Endothelial cell of umbilical vein (primary cell): ENCODE measurements at regions of chr4 and their contacts with region 1.

Region 1: DNA sequence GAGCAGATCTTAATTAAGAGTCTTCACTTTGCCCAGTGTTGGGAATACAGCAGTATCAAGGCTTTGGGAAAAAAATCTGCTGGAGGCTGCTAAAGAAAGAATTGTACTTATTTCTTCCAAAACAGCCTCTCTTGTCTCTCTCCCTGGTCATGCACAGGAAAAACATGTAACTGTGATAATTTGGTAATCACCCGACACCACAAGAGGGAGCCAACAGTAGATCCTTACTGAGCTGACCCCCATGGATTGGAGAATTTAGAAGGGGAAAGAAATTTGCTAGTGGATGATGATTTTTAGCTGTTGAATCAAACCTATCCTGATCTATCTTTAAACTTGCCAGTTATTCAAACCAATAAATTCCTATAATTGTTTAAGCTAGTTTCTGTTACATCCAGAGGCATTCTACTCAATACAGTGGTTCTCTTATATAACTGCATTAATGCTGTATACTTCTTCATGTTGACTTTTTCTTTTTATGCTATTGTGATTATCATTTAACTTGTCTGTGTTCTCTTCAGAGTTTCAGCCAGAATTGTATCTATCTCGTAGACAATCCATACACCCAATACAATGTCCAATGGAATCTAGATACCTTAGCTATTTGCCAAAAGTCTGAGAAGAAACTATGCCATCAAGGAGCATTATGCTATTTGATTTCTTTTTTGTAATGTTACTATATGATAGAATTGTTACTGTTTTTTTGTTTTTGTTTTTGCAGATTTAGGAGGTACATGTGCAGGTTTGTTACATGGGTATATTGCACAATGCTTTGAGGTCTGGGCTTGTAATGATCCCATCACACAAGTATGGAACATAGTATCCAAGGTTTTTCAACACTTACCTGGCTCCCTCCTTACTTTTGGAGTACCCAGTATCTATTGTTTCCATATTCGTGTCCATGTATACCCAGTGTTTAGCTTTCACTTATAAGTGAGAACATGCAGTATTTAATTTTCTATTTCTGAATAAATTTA is 31.3 kb upstream of the ARHGEF38 start:
- DNase-seq: peak; percentile 63
- H3K4me3 ChIP-seq: no peak overlapping the region
- H3K27ac ChIP-seq: no peak overlapping the region
- H3K4me1 ChIP-seq: no peaks in the 10 kb centered on the region
- H3K27me3 ChIP-seq: peaks cover 0 to 3% of the 10 kb centered on the region in 2 experiments
- CTCF ChIP-seq: peak; percentile 48 to 63
- POLR2A ChIP-seq: no peak

Region 2: DNA sequence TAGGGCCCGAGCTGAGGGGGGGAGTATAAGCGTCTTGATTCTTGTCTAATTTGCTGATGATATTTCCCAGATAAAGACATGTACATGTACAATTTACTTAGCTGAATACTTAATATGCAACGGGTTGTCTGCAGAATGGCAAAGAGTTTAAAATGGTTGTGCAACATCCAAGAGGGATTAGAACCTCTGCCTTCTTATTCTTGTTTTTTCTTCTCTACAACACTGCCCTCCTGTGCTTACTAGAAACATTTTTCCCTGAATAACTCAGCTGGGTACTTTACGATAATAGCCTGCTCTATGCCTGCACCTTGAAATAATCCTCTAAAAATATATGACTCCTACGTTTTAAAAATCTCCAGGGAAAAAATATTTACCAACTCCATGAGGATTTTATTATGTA is 145.6 kb after region 1 on chr4:
- CTCF ChIA-PET with region 1: interaction called, 23 read pairs
- POLR2A ChIA-PET with region 1: no interaction called
- dilution Hi-C with region 1: no loop called
- intact Hi-C with region 1: no loop called
- DNase-seq: peak; percentile 1
- H3K4me3 ChIP-seq: no peak overlapping the region
- H3K27ac ChIP-seq: no peak overlapping the region
- H3K4me1 ChIP-seq: no peaks in the 10 kb centered on the region
- H3K27me3 ChIP-seq: no peaks in the 10 kb centered on the region
- CTCF ChIP-seq: no peak
- POLR2A ChIP-seq: no peak

Region 3: DNA sequence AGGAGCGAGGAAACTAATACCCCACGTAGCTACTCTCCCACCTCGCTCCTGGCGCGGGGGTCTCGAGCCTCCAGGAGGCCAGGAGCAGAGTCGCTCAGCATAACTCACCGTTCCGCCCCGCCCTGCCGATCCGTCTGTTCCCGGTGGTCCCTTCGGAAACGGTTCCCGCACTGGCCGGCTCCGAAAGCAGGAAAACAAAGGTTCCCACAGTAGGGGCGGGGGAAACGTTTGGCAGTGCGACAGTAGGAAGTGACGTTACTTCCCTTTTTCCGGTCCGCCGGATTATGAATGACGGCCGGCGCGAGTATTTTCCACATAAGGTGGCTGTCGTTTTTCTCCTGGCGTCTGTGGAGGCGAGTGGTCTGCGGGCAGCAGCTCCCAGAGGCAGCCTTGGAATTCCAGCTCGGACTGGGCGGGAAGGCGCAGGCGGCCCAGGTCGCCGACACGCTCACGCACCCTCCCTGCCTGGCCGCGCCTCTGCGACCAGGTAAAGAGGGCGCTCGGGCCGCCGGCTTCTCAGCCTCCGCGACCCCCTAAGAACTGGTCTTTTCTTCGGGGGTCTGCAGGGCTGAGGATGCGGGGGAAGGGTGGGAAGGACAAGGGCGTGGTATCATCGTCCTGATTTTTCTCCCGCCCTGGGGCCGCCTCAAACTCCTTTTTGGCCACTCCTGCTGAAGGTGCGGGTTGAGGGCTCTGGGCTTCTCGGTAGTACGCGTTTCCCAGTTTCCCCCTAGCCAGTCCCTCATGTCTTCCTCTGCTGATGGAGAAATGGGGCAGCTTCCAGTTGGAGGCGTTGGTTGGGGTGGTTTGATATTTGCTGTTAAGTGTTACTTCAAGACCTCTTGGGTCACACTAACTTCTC is 187.7 kb after region 1 on chr4 and contains the starts of genes GSTCD and INTS12:
- CTCF ChIA-PET with region 1: interaction called, 10 read pairs
- POLR2A ChIA-PET with region 1: no interaction called
- dilution Hi-C with region 1: no loop called
- intact Hi-C with region 1: no loop called
- DNase-seq: peak; percentile 95
- H3K4me3 ChIP-seq: peak within 1 kb of the TSS; percentile 46 to 93 (median 93)
- H3K27ac ChIP-seq: peak within 1 kb of the TSS; percentile 61
- H3K4me1 ChIP-seq: peaks cover 16% of the 10 kb centered on the region
- H3K27me3 ChIP-seq: no peaks in the 10 kb centered on the region
- CTCF ChIP-seq: peak in 1 of 2 donors; percentile 0
- POLR2A ChIP-seq: peak; percentile 89
- total RNA-seq, gene GSTCD: 11.3 and 13.1 TPM in 2 replicates
- total RNA-seq, gene INTS12: 19.5 and 19.7 TPM in 2 replicates

Region 4: DNA sequence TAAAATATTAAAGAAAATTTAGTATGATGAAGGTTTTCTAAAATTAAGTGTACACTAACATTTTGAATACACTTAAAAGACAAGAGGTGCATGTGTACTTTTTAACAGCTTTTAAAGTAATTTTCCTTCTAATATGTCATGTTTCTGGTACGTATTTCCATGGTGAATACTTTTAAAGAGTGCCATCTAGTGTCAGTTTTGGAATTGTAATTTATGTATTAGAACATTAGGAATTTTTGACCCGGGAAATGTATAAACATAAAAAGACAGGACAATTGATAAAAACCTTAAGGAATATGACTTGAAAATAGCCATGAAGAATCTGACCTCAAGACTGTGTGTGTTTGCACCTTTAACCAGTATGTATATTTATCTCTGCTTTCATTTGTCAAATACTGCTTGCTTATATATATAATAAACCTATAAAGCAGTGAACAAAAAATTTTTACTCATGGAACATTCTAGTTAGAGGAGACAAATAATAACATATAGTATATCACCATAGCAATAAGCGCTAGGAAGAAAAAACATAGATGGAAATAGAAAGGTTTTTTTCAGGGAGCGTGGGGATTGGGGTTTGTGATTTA is 194.7 kb after region 1 on chr4:
- CTCF ChIA-PET with region 1: interaction called, 85 read pairs
- POLR2A ChIA-PET with region 1: no interaction called
- dilution Hi-C with region 1: no loop called
- intact Hi-C with region 1: loop called (anchors 1 kb)
- DNase-seq: peak; percentile 64
- H3K4me3 ChIP-seq: no peak overlapping the region
- H3K27ac ChIP-seq: no peak overlapping the region
- H3K4me1 ChIP-seq: no peaks in the 10 kb centered on the region
- H3K27me3 ChIP-seq: no peaks in the 10 kb centered on the region
- CTCF ChIP-seq: peak; percentile 12 to 27
- POLR2A ChIP-seq: no peak

Region 5: GRCh38 chr4:106201373-106201772 is 680.3 kb after region 1 on chr4:
- CTCF ChIA-PET with region 1: interaction called, 36 read pairs
- POLR2A ChIA-PET with region 1: no interaction called
- dilution Hi-C with region 1: no loop called
- intact Hi-C with region 1: loop called (anchors 1 kb)
- DNase-seq: peak; percentile 31
- H3K4me3 ChIP-seq: no peak overlapping the region
- H3K27ac ChIP-seq: no peak overlapping the region
- H3K4me1 ChIP-seq: no peaks in the 10 kb centered on the region
- H3K27me3 ChIP-seq: no peaks in the 10 kb centered on the region
- CTCF ChIP-seq: peak; percentile 26 to 35
- POLR2A ChIP-seq: no peak